Endothelial cell of umbilical vein (primary cell): ENCODE measurements at regions of chr2 and their contacts with region 1.

Region 1: GRCh38 chr2:196171248-196171871 is at the start of gene STK17B:
- DNase-seq: peak; percentile 94
- H3K4me3 ChIP-seq: peak within 1 kb of the TSS; percentile 50 to 94 (median 83)
- H3K27ac ChIP-seq: peak within 1 kb of the TSS; percentile 69
- H3K4me1 ChIP-seq: peaks cover 36% of the 10 kb centered on the region
- H3K27me3 ChIP-seq: peaks cover 4 to 17% of the 10 kb centered on the region in 2 experiments
- CTCF ChIP-seq: peak; percentile 9 to 41
- POLR2A ChIP-seq: peak; percentile 98
- total RNA-seq, gene STK17B: 12.4 and 16.6 TPM in 2 replicates

Region 2: DNA sequence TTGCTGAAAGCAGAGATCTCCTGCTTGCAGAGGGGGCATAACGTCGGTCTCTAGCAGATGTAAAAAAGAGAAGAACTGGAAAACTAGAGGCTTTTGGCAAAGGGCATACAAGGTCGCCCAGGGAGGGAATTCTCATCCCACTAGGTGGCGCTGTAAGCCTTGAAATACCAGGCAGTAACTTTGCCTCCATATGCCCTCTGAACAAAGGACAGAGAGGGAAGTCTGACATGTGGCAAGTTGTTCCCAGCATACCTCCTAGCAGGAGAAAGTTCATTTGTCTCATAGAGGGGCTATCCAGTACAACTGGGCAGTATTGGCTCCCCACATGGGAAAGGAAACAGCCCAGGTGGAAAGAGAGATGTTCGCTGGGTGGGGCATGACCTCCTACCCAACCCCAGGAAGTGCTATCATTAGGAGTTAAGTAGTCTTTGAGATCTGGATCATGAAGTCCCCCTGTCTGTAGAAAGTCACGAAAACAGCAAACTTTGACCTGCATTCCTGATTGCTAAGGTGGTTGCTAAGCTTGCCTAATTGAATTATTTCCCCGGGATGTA is 39.9 kb before region 1 on chr2:
- CTCF ChIA-PET with region 1: no interaction called
- POLR2A ChIA-PET with region 1: no interaction called
- dilution Hi-C with region 1: no loop called
- intact Hi-C with region 1: loop called (anchors 2 kb)
- DNase-seq: peak; percentile 18
- H3K4me3 ChIP-seq: no peak overlapping the region
- H3K27ac ChIP-seq: no peak overlapping the region
- H3K4me1 ChIP-seq: no peaks in the 10 kb centered on the region
- H3K27me3 ChIP-seq: no peaks in the 10 kb centered on the region
- CTCF ChIP-seq: peak in 1 of 2 donors; percentile 19
- POLR2A ChIP-seq: no peak

Region 3: DNA sequence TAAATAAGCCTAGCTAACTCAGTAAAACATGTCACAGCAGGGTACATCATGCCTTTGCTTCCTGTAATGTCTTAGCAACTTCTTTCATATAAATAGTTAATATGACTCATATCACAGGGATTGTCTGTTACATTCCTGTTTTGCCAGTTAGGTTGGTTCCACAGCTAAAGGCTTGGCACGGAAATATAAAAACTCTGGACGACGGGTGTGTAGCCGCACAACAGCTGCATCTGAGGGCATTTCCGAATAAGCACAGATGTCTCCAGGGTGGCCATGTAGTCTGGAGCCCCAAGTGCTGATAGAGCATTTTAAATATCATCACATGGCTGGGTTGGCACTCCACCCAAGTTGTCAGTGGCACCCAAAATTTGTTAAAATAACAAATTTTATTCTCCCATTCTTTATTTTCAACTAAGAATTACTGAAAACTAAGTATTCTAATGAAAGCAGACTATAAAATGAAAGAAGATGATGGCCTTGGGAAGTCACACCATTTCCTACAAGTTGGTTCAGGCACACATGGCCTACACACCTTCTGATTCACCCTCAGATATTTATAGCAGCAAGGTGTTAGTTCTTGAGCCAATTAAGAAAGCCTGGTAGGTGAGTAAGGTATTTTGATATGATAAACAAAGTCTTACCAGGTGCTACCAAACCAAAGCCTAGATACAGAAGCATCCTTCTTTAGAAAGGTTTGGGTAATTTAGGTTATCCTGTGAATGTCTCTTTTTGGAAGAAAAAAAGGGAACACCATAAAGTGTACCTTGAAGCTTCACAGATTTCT is 61.9 kb after region 1 on chr2:
- CTCF ChIA-PET with region 1: interaction called, 3 read pairs
- POLR2A ChIA-PET with region 1: no interaction called
- dilution Hi-C with region 1: no loop called
- intact Hi-C with region 1: loop called (anchors 2 kb)
- DNase-seq: peak; percentile 93
- H3K4me3 ChIP-seq: peak overlapping the region in 1 of 3 experiments; percentile 2
- H3K27ac ChIP-seq: peak overlapping the region; percentile 96
- H3K4me1 ChIP-seq: peaks cover 32% of the 10 kb centered on the region
- H3K27me3 ChIP-seq: no peaks in the 10 kb centered on the region
- CTCF ChIP-seq: no peak
- POLR2A ChIP-seq: no peak

Region 4: DNA sequence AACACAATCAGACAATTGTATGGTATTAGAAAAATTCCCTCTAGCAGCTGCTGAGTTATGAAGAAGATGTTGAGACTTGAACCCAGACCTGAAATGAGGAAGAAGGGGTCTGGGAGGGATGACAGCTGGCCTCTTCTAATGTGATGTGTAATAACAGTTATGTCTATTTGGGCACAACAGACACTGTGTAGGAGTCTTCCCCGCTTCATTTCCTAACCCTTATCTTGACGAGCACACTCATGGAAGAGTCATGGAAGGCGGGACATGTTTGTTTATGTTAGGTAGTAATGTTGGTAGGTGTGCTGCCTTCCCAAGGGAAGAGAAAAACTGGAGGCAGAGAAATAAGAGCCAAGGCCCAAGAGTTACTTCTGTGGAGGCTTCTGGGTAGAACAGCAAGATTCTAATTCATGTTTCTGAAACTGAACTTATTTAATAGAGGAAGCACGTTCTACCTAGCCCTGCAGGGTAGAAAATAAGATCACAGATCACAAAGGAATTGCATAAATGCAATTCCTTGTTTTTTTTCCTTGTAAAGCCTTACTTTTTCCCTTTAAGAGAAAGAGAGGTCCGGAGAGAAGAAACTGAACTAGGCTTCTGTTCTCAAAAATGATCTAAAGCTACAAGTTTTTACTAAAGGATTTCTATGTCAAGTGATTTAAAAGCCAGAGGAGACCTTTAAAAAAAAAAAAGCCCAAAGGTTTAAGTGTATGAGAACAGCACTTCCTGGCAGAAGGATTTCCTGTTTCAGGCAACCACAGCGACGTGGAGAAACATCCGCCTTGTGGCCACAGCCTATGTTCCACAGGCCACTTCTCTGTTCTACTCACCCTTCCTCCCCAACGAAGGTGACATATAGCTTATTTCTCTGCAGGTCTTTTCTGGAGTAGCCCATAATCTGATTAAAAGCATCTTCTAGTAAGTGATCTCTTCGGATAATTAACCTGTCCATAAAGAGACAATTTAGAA is 68.5 kb after region 1 on chr2:
- CTCF ChIA-PET with region 1: interaction called, 3 read pairs
- POLR2A ChIA-PET with region 1: no interaction called
- dilution Hi-C with region 1: no loop called
- intact Hi-C with region 1: loop called (anchors 2 kb)
- DNase-seq: peak; percentile 84
- H3K4me3 ChIP-seq: no peak overlapping the region
- H3K27ac ChIP-seq: peak overlapping the region; percentile 80
- H3K4me1 ChIP-seq: peaks cover 35% of the 10 kb centered on the region
- H3K27me3 ChIP-seq: no peaks in the 10 kb centered on the region
- CTCF ChIP-seq: peak in 1 of 2 donors; percentile 22
- POLR2A ChIP-seq: peak; percentile 21

Region 5: GRCh38 chr2:196268538-196269338 is 97.4 kb after region 1 on chr2:
- CTCF ChIA-PET with region 1: no interaction called
- POLR2A ChIA-PET with region 1: no interaction called
- dilution Hi-C with region 1: no loop called
- intact Hi-C with region 1: loop called (anchors 2 kb)
- DNase-seq: no peak
- H3K4me3 ChIP-seq: no peak overlapping the region
- H3K27ac ChIP-seq: peak overlapping the region; percentile 71
- H3K4me1 ChIP-seq: peaks cover 54% of the 10 kb centered on the region
- H3K27me3 ChIP-seq: no peaks in the 10 kb centered on the region
- CTCF ChIP-seq: no peak
- POLR2A ChIP-seq: no peak

Region 6: DNA sequence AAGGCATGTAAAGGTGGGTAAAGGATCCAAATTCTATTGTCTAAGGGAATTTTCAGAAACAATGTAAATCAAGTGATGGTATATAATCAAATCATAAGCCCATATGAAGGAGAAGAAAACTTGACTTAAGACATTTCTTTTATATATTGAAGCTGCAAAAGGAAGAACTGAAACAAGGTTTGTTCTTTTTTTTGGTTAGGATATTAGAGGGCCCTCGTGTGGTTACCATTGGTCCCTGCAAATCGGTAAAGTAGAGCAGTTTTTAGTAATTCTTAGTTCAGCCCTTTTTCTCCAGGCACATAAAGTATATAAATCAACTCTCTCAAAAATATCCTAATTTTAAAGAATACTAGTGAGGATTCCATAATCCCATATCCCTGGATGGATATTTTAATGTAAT is 105.6 kb after region 1 on chr2:
- CTCF ChIA-PET with region 1: interaction called, 9 read pairs
- POLR2A ChIA-PET with region 1: no interaction called
- dilution Hi-C with region 1: no loop called
- intact Hi-C with region 1: loop called (anchors 2 kb)
- DNase-seq: peak; percentile 46
- H3K4me3 ChIP-seq: peak overlapping the region in 2 of 3 experiments; percentile 38 to 60
- H3K27ac ChIP-seq: peak overlapping the region; percentile 14
- H3K4me1 ChIP-seq: peaks cover 58% of the 10 kb centered on the region
- H3K27me3 ChIP-seq: no peaks in the 10 kb centered on the region
- CTCF ChIP-seq: peak; percentile 32 to 41
- POLR2A ChIP-seq: no peak

Region 7: GRCh38 chr2:196601430-196602306 is 430.3 kb after region 1 on chr2:
- CTCF ChIA-PET with region 1: no interaction called
- POLR2A ChIA-PET with region 1: no interaction called
- dilution Hi-C with region 1: no loop called
- intact Hi-C with region 1: loop called (anchors 10 kb)
- DNase-seq: peak; percentile 88
- H3K4me3 ChIP-seq: no peak overlapping the region
- H3K27ac ChIP-seq: peak overlapping the region; percentile 82
- H3K4me1 ChIP-seq: peaks cover 25% of the 10 kb centered on the region
- H3K27me3 ChIP-seq: no peaks in the 10 kb centered on the region
- CTCF ChIP-seq: no peak
- POLR2A ChIP-seq: no peak